K562 (cell line): ENCODE measurements at regions of chr9 and their contacts with region 1.

Region 1: DNA sequence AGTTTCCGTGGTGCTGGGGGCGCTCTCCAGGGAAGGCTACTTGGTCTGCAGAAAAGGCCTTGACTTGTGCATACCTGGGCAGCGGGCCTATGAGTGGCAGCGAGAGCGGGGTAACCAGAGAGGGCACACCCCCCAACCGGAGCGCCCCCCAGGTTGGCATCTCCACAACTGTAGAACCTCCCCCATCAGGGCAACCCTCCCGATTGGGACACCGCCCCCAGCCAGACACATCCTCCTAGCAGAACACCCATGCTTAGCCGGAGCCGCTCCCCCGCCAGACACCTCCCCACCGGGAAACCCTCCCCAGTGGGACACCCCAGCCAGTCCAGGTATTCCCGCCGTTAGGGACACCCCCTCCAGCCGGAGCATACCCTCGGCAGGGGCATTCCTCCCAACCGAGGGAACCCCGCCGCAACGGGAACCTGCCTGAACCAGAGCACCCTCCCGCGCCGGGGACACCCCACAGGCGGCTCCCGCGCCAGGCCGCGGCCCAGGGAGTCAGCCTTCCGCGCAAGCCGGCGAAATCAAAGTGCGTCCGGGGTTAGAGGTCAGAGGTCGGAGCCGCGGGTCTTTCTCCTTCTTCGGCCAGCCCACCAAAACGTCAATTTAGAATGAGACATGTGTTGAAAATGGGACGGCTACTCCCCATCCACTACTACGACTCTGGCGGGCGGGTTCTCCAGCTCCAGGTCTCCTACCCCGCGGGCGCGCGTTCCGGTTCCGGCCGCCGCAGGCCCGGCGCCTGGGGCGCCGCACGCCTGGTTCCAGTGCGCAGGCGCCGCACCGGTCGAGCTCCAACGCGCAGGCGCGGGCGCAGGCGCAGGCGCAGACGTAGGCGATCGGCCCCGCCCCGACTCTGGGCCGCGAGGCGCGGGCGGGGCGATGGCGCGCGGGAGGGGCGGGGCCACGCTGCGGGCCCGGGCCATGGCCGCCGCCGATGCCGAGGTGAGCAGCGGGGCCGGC is at the start of gene EHMT1:
- DNase-seq: peak; percentile 90 to 98 (median 96)
- ATAC-seq: peak; percentile 78
- H3K4me3 ChIP-seq: peak within 1 kb of the TSS; percentile 75
- H3K27ac ChIP-seq: peak within 1 kb of the TSS; percentile 91
- H3K4me1 ChIP-seq: peaks cover 29 to 54% of the 10 kb centered on the region in 2 experiments
- H3K27me3 ChIP-seq: no peaks in the 10 kb centered on the region
- CTCF ChIP-seq: no peak
- EP300 ChIP-seq: no peak
- POLR2A ChIP-seq: peak; percentile 82
- RAD21 ChIP-seq: peak in 1 of 2 experiments; percentile 12; a peak in 2 of 4 replicates
- polyA plus RNA-seq, gene EHMT1: 2.2 to 3.8 TPM

Region 2: DNA sequence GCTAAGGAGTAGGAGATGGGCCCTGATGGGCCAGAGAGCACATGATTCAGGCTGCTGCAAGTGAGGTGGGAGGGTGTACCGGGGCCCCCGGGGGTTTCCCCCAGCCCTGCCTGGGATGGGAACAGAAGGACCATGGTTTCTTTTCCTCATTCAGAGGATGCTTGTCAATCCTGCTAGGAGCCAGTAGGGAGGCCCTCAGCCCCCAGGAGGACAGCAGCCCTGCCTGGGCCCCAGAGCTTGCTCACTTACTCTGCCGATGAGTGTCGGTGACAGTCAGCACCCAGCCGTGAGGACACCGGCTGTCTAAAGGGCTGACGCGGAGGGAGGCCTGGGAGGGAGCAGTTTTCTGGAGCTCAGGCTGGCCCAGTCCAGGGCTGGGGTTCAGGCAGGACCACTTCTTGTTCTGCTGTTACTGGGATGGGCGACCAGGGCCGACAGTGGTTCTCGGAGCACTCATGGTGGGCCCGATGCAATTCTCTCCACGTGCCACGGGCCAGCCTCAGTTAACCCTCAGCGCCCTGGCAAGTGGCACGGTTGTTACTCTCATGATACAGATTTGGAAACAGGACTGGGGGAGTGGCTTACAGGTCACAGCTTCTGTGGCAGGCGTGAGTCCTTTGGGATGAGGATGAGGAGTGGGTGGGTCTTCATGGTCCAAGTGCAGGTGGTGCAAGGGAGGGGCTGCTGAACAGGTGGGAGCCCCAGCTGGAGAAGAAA is 11.1 kb before region 1 on chr9:
- CTCF ChIA-PET with region 1: no interaction called
- POLR2A ChIA-PET with region 1: interaction called, 11 read pairs
- in situ Hi-C with region 1: no loop called
- intact Hi-C with region 1: no loop called
- DNase-seq: no peak
- ATAC-seq: no peak
- H3K4me3 ChIP-seq: no peak overlapping the region
- H3K27ac ChIP-seq: no peak overlapping the region
- H3K4me1 ChIP-seq: peaks cover 30 to 54% of the 10 kb centered on the region in 2 experiments; a peak in 4 of 5 replicates
- H3K27me3 ChIP-seq: no peaks in the 10 kb centered on the region
- CTCF ChIP-seq: no peak
- EP300 ChIP-seq: no peak
- POLR2A ChIP-seq: no peak
- RAD21 ChIP-seq: no peak

Region 3: GRCh38 chr9:137632230-137633161 is 14.1 kb after region 1 on chr9:
- CTCF ChIA-PET with region 1: no interaction called
- POLR2A ChIA-PET with region 1: interaction called, 10 read pairs
- in situ Hi-C with region 1: no loop called
- intact Hi-C with region 1: no loop called
- DNase-seq: no peak
- ATAC-seq: no peak
- H3K4me3 ChIP-seq: no peak overlapping the region
- H3K27ac ChIP-seq: no peak overlapping the region
- H3K4me1 ChIP-seq: peaks cover 3 to 7% of the 10 kb centered on the region in 2 experiments; a peak in 4 of 5 replicates
- H3K27me3 ChIP-seq: no peaks in the 10 kb centered on the region
- CTCF ChIP-seq: no peak
- EP300 ChIP-seq: no peak
- POLR2A ChIP-seq: no peak
- RAD21 ChIP-seq: no peak

Region 4: DNA sequence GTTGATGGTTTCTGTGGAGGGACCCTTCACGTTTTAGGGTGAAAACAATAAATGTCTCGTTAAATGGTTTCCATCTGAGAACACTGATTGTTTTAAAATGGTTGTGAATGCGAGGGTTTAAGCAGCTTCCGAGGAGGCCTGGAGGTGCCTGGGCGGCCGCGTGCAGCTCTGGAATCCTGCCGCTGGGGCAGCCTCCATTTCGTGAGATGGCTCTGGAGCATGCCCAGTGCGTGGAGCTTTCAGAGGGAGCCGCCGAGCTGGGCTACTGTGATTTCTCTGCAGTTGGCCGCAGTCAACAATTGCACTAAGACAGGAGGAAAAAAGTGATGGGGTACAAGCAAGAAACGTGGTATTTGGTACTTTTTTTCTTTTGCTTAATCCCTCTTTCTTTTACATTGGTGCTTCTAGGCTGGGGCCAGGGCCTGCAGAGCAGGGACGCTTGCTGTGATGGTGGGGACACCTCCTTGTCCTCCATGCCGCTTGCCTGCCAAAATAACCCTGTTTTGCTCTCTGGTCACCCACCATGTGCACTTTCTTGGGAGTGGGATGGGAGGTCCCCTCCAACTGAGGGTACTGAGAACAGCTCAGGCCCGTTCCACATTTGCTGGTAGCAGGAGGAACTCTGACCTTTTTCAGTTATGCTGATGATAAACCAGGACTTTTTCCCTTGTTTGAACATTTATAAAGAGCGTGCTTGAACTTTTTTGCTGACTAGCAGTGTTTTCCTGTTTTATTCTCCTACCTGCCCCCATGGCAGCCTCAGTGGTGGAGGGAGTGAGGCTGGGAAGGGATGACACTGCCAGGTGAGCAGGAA is 47.5 kb after region 1 on chr9:
- CTCF ChIA-PET with region 1: no interaction called
- POLR2A ChIA-PET with region 1: no interaction called
- in situ Hi-C with region 1: no loop called
- intact Hi-C with region 1: loop called (anchors 5 kb)
- DNase-seq: no peak
- ATAC-seq: no peak
- H3K4me3 ChIP-seq: no peak overlapping the region
- H3K27ac ChIP-seq: no peak overlapping the region
- H3K4me1 ChIP-seq: peaks cover 9 to 34% of the 10 kb centered on the region in 2 experiments; a peak in 4 of 5 replicates
- H3K27me3 ChIP-seq: no peaks in the 10 kb centered on the region
- CTCF ChIP-seq: no peak
- EP300 ChIP-seq: no peak
- POLR2A ChIP-seq: no peak
- RAD21 ChIP-seq: no peak